Caco-2 (cell line): ENCODE measurements at regions of chr10 and their contacts with region 1.

Region 1: GRCh38 chr10:13787015-13787421 is 200.3 kb downstream of the PRPF18 start:
- DNase-seq: no peak
- H3K4me3 ChIP-seq: no peak overlapping the region
- H3K4me3 Mint-ChIP-seq: no peak overlapping the region
- H3K27ac Mint-ChIP-seq: no peak overlapping the region
- H3K4me1 ChIP-seq: no peaks in the 10 kb centered on the region; the same call in 1 of the 2 replicates
- H3K4me1 Mint-ChIP-seq: no peaks in the 10 kb centered on the region
- H3K27me3 ChIP-seq: no peaks in the 10 kb centered on the region; the same call in 1 of the 2 replicates
- H3K27me3 Mint-ChIP-seq: no peaks in the 10 kb centered on the region
- CTCF ChIP-seq: no peak

Region 2: GRCh38 chr10:13994932-13995331 is 207.9 kb after region 1 on chr10:
- CTCF ChIA-PET with region 1: no interaction called
- POLR2A ChIA-PET with region 1: no interaction called
- intact Hi-C with region 1: loop called (anchors 5 kb)
- DNase-seq: no peak
- H3K4me3 ChIP-seq: no peak overlapping the region
- H3K4me3 Mint-ChIP-seq: no peak overlapping the region
- H3K27ac Mint-ChIP-seq: no peak overlapping the region
- H3K4me1 ChIP-seq: no peaks in the 10 kb centered on the region
- H3K4me1 Mint-ChIP-seq: no peaks in the 10 kb centered on the region
- H3K27me3 ChIP-seq: no peaks in the 10 kb centered on the region
- H3K27me3 Mint-ChIP-seq: peaks cover 3% of the 10 kb centered on the region
- CTCF ChIP-seq: no peak

Region 3: DNA sequence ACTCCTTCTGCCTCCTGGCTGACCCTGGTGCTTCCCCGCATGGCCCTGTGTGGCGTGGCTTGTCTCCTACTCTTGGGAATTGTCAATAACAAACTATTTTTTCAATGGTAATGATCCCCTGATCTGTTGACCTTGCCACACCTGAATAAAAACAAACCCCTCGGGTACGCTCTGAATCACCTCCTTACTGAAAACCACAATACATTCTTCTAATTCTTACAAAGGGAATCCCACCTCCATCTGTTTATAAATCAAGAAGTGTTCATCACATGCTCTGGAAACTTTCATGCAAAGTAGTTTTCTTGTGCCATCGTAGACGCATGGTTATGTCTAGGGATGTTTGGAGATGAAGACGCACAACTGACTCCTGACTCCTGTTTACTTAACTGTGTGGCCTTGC is 297.9 kb after region 1 on chr10:
- CTCF ChIA-PET with region 1: no interaction called
- POLR2A ChIA-PET with region 1: no interaction called
- intact Hi-C with region 1: loop called (anchors 1 kb)
- DNase-seq: no peak
- H3K4me3 ChIP-seq: no peak overlapping the region
- H3K4me3 Mint-ChIP-seq: no peak overlapping the region
- H3K27ac Mint-ChIP-seq: no peak overlapping the region
- H3K4me1 ChIP-seq: no peaks in the 10 kb centered on the region
- H3K4me1 Mint-ChIP-seq: no peaks in the 10 kb centered on the region
- H3K27me3 ChIP-seq: no peaks in the 10 kb centered on the region
- H3K27me3 Mint-ChIP-seq: no peaks in the 10 kb centered on the region
- CTCF ChIP-seq: no peak

Region 4: GRCh38 chr10:14093730-14094484 is 306.9 kb after region 1 on chr10:
- CTCF ChIA-PET with region 1: interaction called, 12 read pairs
- POLR2A ChIA-PET with region 1: no interaction called
- intact Hi-C with region 1: loop called (anchors 1 kb)
- DNase-seq: peak in 1 of 2 experiments; percentile 51
- H3K4me3 ChIP-seq: no peak overlapping the region
- H3K4me3 Mint-ChIP-seq: no peak overlapping the region
- H3K27ac Mint-ChIP-seq: no peak overlapping the region
- H3K4me1 ChIP-seq: no peaks in the 10 kb centered on the region
- H3K4me1 Mint-ChIP-seq: no peaks in the 10 kb centered on the region
- H3K27me3 ChIP-seq: no peaks in the 10 kb centered on the region
- H3K27me3 Mint-ChIP-seq: no peaks in the 10 kb centered on the region
- CTCF ChIP-seq: peak; percentile 24 to 53

Region 5: DNA sequence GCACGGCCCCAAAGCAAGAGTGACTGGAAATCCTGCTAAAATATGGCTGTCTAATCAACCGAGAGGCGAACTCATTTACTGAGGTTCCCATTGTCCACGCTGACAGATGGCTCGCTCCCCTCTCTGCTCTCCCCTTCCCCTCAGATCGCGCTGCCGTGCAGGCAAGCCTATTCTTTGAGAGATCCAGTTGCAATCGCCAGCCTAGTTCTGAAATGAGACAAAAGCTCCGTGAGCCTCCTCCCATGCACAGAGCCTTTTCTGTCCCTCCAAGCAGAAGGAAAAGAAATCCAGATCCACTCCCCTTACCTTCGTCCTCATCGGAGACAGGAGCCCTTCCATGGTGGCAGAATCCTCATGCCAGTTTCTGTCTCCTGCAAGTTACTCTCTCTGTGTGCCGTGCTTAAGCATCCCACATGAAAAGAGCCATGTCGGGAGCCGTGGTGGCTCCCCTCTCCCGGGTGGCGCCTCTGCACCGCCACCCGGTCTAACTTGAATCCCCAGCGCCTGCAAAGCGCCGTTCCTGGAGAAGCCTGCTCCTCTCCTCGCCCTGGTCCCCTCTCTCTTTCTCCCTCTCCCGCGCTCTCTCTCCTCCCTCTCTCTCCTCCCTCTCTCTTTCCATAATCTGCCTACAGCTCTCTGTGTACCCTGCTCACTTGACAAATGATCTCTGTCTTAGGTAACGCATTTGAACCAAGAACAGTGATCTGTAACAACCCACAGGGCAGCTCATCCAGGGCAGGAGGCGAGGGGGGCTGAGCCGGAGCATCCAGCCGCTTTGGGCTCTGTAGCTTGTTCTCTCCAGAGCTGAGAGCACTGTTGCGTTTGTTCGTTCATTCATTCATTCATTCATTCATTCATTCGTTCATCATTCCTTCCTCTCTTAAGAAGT is 386.9 kb after region 1 on chr10:
- CTCF ChIA-PET with region 1: interaction called, 4 read pairs
- POLR2A ChIA-PET with region 1: no interaction called
- intact Hi-C with region 1: loop called (anchors 5 kb)
- DNase-seq: peak; percentile 45 to 62
- H3K4me3 ChIP-seq: peak overlapping the region; percentile 50
- H3K4me3 Mint-ChIP-seq: peak overlapping the region; percentile 74
- H3K27ac Mint-ChIP-seq: peak overlapping the region; percentile 14
- H3K4me1 ChIP-seq: 0 out of 2 replicates have a peak, but pooled peaks cover 5% of the 10 kb centered on the region
- H3K4me1 Mint-ChIP-seq: peaks cover 4% of the 10 kb centered on the region
- H3K27me3 ChIP-seq: no peaks in the 10 kb centered on the region
- H3K27me3 Mint-ChIP-seq: peaks cover 15% of the 10 kb centered on the region
- CTCF ChIP-seq: no peak

Region 6: DNA sequence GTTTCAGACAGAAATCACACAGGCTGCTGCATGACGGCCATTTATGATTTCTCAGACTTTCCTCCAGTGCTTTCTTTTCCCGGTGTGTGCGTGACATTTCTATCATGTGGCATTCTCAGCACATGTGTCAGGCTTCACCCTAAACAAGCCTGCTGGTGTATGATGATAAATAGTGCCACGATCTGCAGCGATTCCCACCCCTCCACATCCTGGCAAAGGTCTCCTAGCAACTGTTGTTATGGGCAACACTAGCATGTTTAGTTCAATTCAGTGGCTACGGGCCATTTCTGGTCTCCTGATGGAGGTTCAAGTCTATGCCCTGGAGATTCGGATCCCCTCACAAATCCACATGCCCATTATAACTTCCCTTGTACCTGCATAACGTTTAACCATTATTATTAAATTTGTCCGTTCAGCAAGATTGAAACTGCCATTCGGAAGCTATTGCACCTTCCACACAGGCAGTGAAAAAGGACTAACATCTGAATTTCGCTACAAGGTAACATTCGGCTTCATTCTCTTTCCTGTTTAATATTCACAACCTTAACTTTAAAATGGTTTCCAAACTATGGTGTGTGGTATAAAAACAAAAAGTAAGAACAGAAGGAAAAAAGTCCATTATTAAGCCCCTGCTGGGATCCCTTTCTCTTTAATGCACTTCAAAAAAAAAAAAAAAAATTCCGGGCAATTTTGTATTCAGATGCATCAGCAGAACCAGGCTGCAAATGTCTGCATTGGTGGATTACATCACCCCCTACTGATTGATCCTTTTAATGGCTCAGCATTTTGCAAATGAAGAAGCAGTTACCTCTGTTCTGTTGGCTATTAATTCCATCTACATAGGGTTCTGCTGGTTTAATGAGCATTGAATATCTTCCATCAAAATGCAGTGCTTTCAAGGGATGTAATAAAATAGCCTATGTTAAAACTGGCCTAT is 453.5 kb after region 1 on chr10:
- CTCF ChIA-PET with region 1: interaction called, 3 read pairs
- POLR2A ChIA-PET with region 1: no interaction called
- intact Hi-C with region 1: loop called (anchors 5 kb)
- DNase-seq: no peak
- H3K4me3 ChIP-seq: no peak overlapping the region
- H3K4me3 Mint-ChIP-seq: no peak overlapping the region
- H3K27ac Mint-ChIP-seq: no peak overlapping the region
- H3K4me1 ChIP-seq: no peaks in the 10 kb centered on the region; the same call in 1 of the 2 replicates
- H3K4me1 Mint-ChIP-seq: peaks cover 7% of the 10 kb centered on the region
- H3K27me3 ChIP-seq: no peaks in the 10 kb centered on the region
- H3K27me3 Mint-ChIP-seq: no peaks in the 10 kb centered on the region
- CTCF ChIP-seq: peak; percentile 12 to 21

Region 7: GRCh38 chr10:14478604-14479003 is 691.6 kb after region 1 on chr10:
- CTCF ChIA-PET with region 1: no interaction called
- POLR2A ChIA-PET with region 1: no interaction called
- intact Hi-C with region 1: loop called (anchors 5 kb)
- DNase-seq: peak in 1 of 2 experiments; percentile 63
- H3K4me3 ChIP-seq: no peak overlapping the region
- H3K4me3 Mint-ChIP-seq: no peak overlapping the region
- H3K27ac Mint-ChIP-seq: no peak overlapping the region
- H3K4me1 ChIP-seq: peaks cover 4% of the 10 kb centered on the region; the same call in 1 of the 2 replicates
- H3K4me1 Mint-ChIP-seq: no peaks in the 10 kb centered on the region
- H3K27me3 ChIP-seq: no peaks in the 10 kb centered on the region
- H3K27me3 Mint-ChIP-seq: no peaks in the 10 kb centered on the region
- CTCF ChIP-seq: peak; percentile 52 to 75

Region 8: GRCh38 chr10:14698111-14698828 is 911.3 kb after region 1 on chr10:
- CTCF ChIA-PET with region 1: no interaction called
- POLR2A ChIA-PET with region 1: no interaction called
- intact Hi-C with region 1: no loop called
- DNase-seq: no peak
- H3K4me3 ChIP-seq: no peak overlapping the region
- H3K4me3 Mint-ChIP-seq: no peak overlapping the region
- H3K27ac Mint-ChIP-seq: peak overlapping the region; percentile 21
- H3K4me1 ChIP-seq: peaks cover 40% of the 10 kb centered on the region
- H3K4me1 Mint-ChIP-seq: peaks cover 46% of the 10 kb centered on the region
- H3K27me3 ChIP-seq: no peaks in the 10 kb centered on the region
- H3K27me3 Mint-ChIP-seq: no peaks in the 10 kb centered on the region
- CTCF ChIP-seq: no peak